ENCODE measurements at regions of chr6 and their contacts with region 1.

Region 1: DNA sequence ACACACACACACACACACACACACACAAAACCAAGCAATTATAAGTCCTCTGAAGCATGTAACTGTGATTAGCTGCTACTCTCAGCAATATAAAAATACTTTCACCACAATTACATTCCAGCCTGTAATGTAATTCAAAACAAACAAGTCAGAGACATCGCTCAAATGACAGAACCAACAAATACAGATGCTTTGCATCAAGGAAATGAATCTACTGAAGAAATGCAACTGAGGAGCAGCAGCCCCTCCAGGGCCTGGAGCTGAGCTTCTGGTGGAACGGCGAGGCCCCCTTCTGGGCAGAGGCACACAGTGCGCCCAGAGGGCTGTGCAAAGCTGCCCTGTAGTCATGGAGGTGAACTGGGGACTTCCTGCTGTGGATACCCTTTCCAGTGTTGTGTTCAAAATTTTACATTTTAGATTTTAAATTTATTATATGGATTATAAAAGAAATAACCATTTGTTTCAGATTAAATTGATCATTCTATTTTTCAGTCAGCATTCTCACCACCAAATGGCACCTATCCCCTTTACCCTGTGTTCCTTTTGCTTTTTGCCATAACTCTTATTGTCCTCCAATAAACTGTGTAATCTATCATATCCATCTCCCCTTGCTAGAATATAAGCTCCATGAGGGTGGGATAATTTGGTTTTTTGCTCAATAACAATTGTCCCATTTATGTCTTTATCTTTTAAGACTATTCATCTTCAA is 23.2 kb downstream of the ADAT2 start:
- DNase-seq: peak; percentile 82
- H3K4me3 Mint-ChIP-seq: no peak overlapping the region
- H3K27ac Mint-ChIP-seq: peak overlapping the region; percentile 53
- H3K4me1 Mint-ChIP-seq: no peaks in the 10 kb centered on the region
- H3K27me3 Mint-ChIP-seq: no peaks in the 10 kb centered on the region

Region 2: GRCh38 chr6:142474531-142475289 is 952.6 kb before region 1 on chr6:
- CTCF ChIA-PET with region 1: interaction called, 16 read pairs
- DNase-seq: no peak
- H3K4me3 Mint-ChIP-seq: no peak overlapping the region
- H3K27ac Mint-ChIP-seq: no peak overlapping the region
- H3K4me1 Mint-ChIP-seq: peaks cover 11% of the 10 kb centered on the region
- H3K27me3 Mint-ChIP-seq: no peaks in the 10 kb centered on the region

Region 3: DNA sequence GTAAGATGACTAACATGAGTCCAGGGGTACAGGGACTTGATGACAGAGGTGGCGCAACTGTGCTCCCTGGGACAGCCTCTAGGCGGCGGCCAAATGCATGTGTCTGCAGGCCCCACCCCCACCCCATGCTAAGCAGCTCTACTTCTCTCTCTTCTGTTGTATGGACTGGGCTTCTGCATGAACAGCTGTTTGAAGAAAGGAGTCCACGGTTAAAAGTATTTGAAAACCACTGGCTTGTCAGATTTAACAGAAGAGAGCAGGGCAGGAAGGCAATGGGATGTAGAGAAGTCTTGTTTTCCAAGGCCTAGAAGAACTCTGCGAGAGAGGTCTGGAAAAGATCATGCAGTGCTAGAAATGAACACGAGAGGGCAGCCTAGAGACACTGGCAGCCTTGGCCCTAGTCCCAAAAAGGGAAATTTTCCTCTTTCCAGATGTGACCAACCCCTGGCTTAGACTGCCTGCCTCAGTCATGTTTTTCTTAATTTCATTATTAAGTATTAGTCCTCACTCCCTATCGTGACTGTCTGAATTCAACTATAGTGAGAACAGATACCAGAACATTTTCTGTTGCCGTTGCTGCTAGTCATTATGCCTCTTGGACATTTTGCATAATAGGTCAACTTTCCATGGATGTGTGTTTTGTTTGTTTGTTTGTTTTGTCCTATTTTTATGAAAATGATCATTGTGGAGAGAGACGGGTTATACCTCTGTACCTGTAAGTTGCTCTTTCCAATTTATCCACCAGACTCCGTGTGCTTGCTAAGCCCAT is 860.5 kb before region 1 on chr6:
- CTCF ChIA-PET with region 1: interaction called, 20 read pairs
- DNase-seq: peak; percentile 66
- H3K4me3 Mint-ChIP-seq: no peak overlapping the region
- H3K27ac Mint-ChIP-seq: no peak overlapping the region
- H3K4me1 Mint-ChIP-seq: peaks cover 66% of the 10 kb centered on the region
- H3K27me3 Mint-ChIP-seq: no peaks in the 10 kb centered on the region

Region 4: GRCh38 chr6:142692942-142693341 is 734.3 kb before region 1 on chr6:
- CTCF ChIA-PET with region 1: interaction called, 26 read pairs
- DNase-seq: peak; percentile 72
- H3K4me3 Mint-ChIP-seq: no peak overlapping the region
- H3K27ac Mint-ChIP-seq: no peak overlapping the region
- H3K4me1 Mint-ChIP-seq: peaks cover 10% of the 10 kb centered on the region
- H3K27me3 Mint-ChIP-seq: no peaks in the 10 kb centered on the region

Region 5: DNA sequence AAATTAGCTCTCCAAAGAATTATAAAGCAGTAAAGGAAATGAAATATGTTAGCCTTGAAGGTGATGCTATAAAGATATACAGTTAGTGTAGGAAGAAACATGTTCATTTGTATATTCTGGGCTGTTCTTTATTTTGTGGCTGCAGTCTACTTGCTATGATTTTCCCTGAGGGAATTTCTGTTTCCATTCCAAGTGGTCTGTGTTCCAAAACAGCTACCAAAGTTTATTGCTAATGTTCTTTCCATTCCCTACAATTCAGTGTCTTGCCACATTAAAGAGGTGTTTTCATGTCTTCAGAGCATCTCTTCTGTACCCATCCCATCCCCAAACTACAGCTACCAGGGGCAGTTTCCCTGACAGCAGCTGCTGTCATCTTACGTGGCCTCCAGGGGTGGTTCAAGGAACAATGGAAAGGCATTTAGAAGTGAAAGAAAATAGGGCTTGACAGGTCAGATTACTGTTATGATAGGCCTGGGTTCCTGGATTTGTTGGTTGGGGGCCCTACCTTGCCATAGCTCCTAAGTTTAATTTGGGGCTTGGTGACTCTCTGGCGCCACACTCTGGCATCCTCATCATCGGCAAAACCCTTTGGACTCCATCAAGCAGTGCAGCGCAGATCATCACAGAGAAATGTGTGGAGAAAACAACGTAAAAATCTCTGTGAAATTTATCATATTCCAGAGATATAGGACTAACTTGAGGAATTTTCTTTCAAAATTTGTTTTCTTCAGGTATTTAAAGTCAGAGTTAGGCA is 400.4 kb before region 1 on chr6:
- CTCF ChIA-PET with region 1: interaction called, 10 read pairs
- DNase-seq: peak; percentile 60
- H3K4me3 Mint-ChIP-seq: no peak overlapping the region
- H3K27ac Mint-ChIP-seq: no peak overlapping the region
- H3K4me1 Mint-ChIP-seq: no peaks in the 10 kb centered on the region
- H3K27me3 Mint-ChIP-seq: no peaks in the 10 kb centered on the region

Region 6: DNA sequence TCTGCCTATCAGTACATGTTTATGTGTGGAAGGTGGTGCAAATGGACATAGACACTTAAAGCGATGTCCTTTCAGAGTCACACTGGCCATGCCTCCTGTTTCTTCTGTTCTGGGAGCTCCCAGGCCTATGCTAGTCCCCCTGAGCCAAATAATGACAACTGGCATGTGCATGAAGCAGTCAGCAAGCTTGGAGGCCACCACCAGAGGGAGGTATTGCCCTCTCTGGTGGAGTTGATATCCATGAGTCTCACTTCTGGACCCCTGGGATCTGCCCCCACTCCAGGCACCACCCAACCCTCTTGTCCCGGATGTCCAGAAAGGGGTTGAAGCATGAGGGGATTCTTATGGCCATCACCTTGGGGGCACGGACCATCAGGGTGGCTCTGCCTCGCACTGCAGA is 194.4 kb before region 1 on chr6:
- CTCF ChIA-PET with region 1: interaction called, 20 read pairs
- DNase-seq: peak; percentile 43
- H3K4me3 Mint-ChIP-seq: no peak overlapping the region
- H3K27ac Mint-ChIP-seq: no peak overlapping the region
- H3K4me1 Mint-ChIP-seq: no peaks in the 10 kb centered on the region
- H3K27me3 Mint-ChIP-seq: no peaks in the 10 kb centered on the region

Measured in activated naive CD4-positive, alpha-beta T cell treated with anti-CD3 and anti-CD28 coated beads, Interleukin-2, amount 10 ng/mL, durations not matched to agents 7 days and 5 days (primary cell).